CD8-positive, alpha-beta memory T cell (primary cell): ENCODE measurements at regions of chr1 and their contacts with region 1.

Region 1: DNA sequence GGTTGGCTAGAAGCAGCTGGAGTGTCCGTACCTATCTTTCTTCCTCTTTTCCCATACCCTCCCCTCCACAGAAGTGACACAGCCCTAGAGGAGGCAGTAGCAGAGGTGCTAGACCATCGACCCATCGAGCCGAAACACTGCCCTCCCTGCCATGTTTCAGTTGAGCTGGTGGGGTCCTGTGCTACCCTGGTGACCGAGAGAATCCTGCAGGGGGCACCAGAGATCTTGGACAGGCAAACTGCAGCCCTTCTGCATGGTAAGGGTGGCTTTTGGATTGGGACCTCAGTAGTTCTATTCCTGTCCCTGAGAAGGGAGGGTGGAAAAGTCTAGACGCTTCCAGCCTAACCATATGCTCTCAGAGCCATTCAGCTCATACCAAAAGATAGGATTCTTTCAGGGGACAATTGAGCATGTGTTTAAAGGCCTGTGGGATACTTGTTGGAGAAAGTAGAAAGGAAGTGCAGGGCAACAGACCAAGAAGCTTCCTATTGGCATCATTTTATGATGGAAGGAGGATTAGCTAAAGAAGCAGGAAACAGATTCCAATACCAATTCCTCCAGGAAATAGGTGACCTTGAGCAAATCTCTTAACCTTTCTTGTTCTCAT is 11.7 kb upstream of the BNIPL start:
- DNase-seq: peak; percentile 77 to 90 (median 83)
- H3K4me3 ChIP-seq: no peak overlapping the region
- H3K4me3 Mint-ChIP-seq: peak overlapping the region in 3 of 7 donors; percentile 28 to 72 (median 43)
- H3K27ac ChIP-seq: no peak overlapping the region
- H3K27ac Mint-ChIP-seq: peak overlapping the region; percentile 11 to 90 (median 73)
- H3K4me1 ChIP-seq: peaks cover 7% of the 10 kb centered on the region
- H3K4me1 Mint-ChIP-seq: peaks cover 6 to 7% (median 7%) of the 10 kb centered on the region in 3 donors
- H3K27me3 ChIP-seq: no peaks in the 10 kb centered on the region
- H3K27me3 Mint-ChIP-seq: no peaks in the 10 kb centered on the region

Region 2: GRCh38 chr1:150995896-150996295 is 28.7 kb before region 1 on chr1:
- CTCF ChIA-PET with region 1: no interaction called
- POLR2A ChIA-PET with region 1: no interaction called
- DNase-seq: peak in 2 of 5 donors; percentile 23 to 40
- H3K4me3 ChIP-seq: no peak overlapping the region
- H3K4me3 Mint-ChIP-seq: peak overlapping the region in 1 of 7 donors; percentile 67
- H3K27ac ChIP-seq: no peak overlapping the region
- H3K27ac Mint-ChIP-seq: peak overlapping the region in 5 of 8 donors; percentile 22 to 93 (median 63)
- H3K4me1 ChIP-seq: peaks cover 24% of the 10 kb centered on the region
- H3K4me1 Mint-ChIP-seq: peaks cover 5 to 7% (median 6%) of the 10 kb centered on the region in 3 donors
- H3K27me3 ChIP-seq: no peaks in the 10 kb centered on the region
- H3K27me3 Mint-ChIP-seq: peaks cover 2 to 8% of the 10 kb centered on the region in 2 donors

Region 3: GRCh38 chr1:151047925-151048645 is 23.4 kb after region 1 on chr1:
- CTCF ChIA-PET with region 1: interaction called, 60 read pairs
- POLR2A ChIA-PET with region 1: no interaction called
- DNase-seq: peak; percentile 38 to 76 (median 63)
- H3K4me3 ChIP-seq: peak overlapping the region; percentile 76
- H3K4me3 Mint-ChIP-seq: peak overlapping the region; percentile 88 to 96 (median 91)
- H3K27ac ChIP-seq: peak overlapping the region; percentile 53
- H3K27ac Mint-ChIP-seq: peak overlapping the region; percentile 87 to 98 (median 93)
- H3K4me1 ChIP-seq: peaks cover 54% of the 10 kb centered on the region
- H3K4me1 Mint-ChIP-seq: peaks cover 63 to 78% (median 74%) of the 10 kb centered on the region in 3 donors
- H3K27me3 ChIP-seq: no peaks in the 10 kb centered on the region
- H3K27me3 Mint-ChIP-seq: no peaks in the 10 kb centered on the region

Region 4: GRCh38 chr1:151070474-151071276 is 46.0 kb after region 1 on chr1 and contains the start of gene GABPB2:
- CTCF ChIA-PET with region 1: interaction called, 32 read pairs
- POLR2A ChIA-PET with region 1: interaction called, 3 read pairs
- DNase-seq: peak; percentile 76 to 92 (median 86)
- H3K4me3 ChIP-seq: peak within 1 kb of the TSS; percentile 88
- H3K4me3 Mint-ChIP-seq: peak within 1 kb of the TSS; percentile 96 to 99 (median 98)
- H3K27ac ChIP-seq: peak within 1 kb of the TSS; percentile 94
- H3K27ac Mint-ChIP-seq: peak within 1 kb of the TSS; percentile 96 to 100 (median 100)
- H3K4me1 ChIP-seq: peaks cover 11% of the 10 kb centered on the region
- H3K4me1 Mint-ChIP-seq: peaks cover 25 to 31% (median 31%) of the 10 kb centered on the region in 3 donors
- H3K27me3 ChIP-seq: no peaks in the 10 kb centered on the region
- H3K27me3 Mint-ChIP-seq: no peaks in the 10 kb centered on the region
- total RNA-seq, gene GABPB2: 19.2 to 19.4 TPM

Region 5: DNA sequence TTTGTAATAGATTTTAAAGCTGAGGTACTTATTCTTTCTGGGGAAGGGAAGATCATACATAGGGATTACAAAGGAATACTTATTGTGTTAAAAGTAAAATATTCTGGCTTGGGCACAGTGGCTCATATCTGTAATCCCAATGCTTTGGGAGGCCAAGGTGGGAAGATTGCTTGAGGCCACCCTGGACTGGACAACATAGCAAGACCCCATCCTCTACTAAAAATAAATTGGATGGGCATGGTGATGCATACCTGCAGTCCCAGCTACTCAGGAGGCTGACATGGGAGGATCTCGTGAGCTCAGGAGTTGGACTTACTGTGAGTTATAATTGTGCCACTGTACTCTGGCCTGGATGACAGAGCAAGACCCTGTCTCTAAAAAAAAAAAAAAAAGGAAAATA is 73.5 kb after region 1 on chr1:
- CTCF ChIA-PET with region 1: interaction called, 33 read pairs
- POLR2A ChIA-PET with region 1: no interaction called
- DNase-seq: no peak
- H3K4me3 ChIP-seq: no peak overlapping the region
- H3K4me3 Mint-ChIP-seq: no peak overlapping the region
- H3K27ac ChIP-seq: no peak overlapping the region
- H3K27ac Mint-ChIP-seq: peak overlapping the region in 2 of 8 donors; percentile 26 to 29
- H3K4me1 ChIP-seq: no peaks in the 10 kb centered on the region
- H3K4me1 Mint-ChIP-seq: no peaks in the 10 kb centered on the region
- H3K27me3 ChIP-seq: no peaks in the 10 kb centered on the region
- H3K27me3 Mint-ChIP-seq: no peaks in the 10 kb centered on the region

Region 6: DNA sequence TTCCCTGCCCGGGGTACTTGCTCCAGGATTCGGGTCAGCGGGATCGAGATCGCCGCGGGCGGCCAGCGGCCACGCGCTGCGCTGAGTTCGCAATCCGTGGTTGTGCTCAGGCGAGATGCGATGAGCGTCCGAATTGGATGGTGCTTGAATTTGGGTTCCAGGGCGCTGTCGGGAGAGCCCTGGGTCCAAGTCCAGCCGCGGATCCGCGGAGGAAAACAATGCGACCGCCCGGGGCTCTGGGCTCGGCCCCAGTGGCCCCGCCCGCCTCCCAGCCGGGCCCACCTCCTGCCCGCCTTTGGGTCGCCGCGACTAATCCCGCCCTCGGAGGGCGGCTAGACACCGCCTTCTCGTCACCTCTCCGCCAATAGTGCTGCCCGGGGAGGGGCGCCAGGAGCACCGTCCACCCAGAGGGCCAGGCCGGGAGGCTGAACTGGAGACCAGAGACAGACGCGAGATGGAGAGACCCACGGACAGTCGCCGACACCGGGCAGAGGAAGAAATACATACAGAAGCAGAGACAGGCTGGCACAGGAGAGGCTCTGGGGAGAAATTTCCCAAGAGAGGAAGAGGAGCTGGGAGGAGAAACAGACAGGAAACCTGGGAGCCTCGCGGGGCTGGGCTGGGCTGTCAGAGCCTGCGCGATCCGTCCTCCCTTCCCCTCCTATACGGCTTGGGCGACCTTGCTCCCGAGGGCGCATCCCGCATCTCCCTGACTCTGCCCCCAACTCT is 121.9 kb after region 1 on chr1 and contains the start of gene SEMA6C:
- CTCF ChIA-PET with region 1: interaction called, 12 read pairs
- POLR2A ChIA-PET with region 1: interaction called, 4 read pairs
- DNase-seq: peak; percentile 79 to 90 (median 86)
- H3K4me3 ChIP-seq: peak within 1 kb of the TSS; percentile 92
- H3K4me3 Mint-ChIP-seq: peak within 1 kb of the TSS; percentile 85 to 97 (median 96)
- H3K27ac ChIP-seq: peak within 1 kb of the TSS; percentile 61
- H3K27ac Mint-ChIP-seq: peak within 1 kb of the TSS in 7 of 8 donors; percentile 55 to 97 (median 89)
- H3K4me1 ChIP-seq: peaks cover 18% of the 10 kb centered on the region
- H3K4me1 Mint-ChIP-seq: peaks cover 10 to 24% (median 18%) of the 10 kb centered on the region in 3 donors
- H3K27me3 ChIP-seq: no peaks in the 10 kb centered on the region
- H3K27me3 Mint-ChIP-seq: no peaks in the 10 kb centered on the region
- total RNA-seq, gene SEMA6C: 2.9 to 3.1 TPM